ENCODE measurements at regions of chr17 and their contacts with region 1.

Region 1: DNA sequence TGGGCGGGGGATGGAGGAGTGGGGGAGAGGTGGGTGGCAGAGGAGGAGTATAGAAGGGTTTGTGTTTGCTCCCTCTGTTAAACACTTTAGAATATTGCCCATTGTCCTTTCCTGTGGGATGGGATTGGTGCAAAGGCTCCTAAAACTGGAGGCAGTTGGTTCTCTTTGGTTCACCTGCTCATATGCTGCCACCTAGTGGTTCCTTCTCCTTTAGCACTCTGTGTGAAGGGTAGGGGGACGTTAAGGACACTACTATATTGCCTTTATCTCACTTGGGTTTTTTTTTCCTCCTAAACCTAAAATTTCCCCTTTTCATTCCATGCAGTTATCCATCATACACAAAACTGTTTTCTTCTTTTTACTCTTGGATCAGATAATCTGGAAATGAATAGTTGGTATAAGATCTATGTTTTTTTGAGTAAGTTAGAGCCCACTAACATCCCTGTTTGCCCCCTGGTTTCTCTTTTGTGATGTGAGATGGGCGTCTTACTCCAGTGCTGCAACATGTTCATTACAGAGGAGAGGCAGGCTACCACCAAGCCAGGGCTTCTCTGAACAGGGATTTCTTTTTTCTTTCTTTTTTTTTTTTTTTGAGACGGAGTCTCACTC is 23.8 kb downstream of the SNX11 start:
- DNase-seq: peak in 3 of 6 donors; percentile 37 to 62 (median 53)
- ATAC-seq: peak; percentile 72 to 96 (median 91)
- H3K4me3 ChIP-seq: no peak overlapping the region
- H3K27ac ChIP-seq: no peak overlapping the region
- H3K4me1 ChIP-seq: no peaks in the 10 kb centered on the region
- H3K27me3 ChIP-seq: no peaks in the 10 kb centered on the region
- CTCF ChIP-seq: peak; percentile 54 to 87 (median 74)

Region 2: GRCh38 chr17:48024937-48025906 is 106.1 kb before region 1 on chr17:
- intact Hi-C with region 1: loop called in 2 of 3 experiments (anchors 5 kb)
- DNase-seq: peak; percentile 94 to 99 (median 99)
- ATAC-seq: peak; percentile 81 to 91 (median 86)
- H3K4me3 ChIP-seq: peak overlapping the region in 3 of 4 donors; percentile 9 to 53 (median 37)
- H3K27ac ChIP-seq: peak overlapping the region; percentile 6 to 71 (median 42)
- H3K4me1 ChIP-seq: peaks cover 24 to 30% (median 28%) of the 10 kb centered on the region in 3 donors
- H3K27me3 ChIP-seq: no peaks in the 10 kb centered on the region
- CTCF ChIP-seq: peak; percentile 60 to 75 (median 68)

Region 3: DNA sequence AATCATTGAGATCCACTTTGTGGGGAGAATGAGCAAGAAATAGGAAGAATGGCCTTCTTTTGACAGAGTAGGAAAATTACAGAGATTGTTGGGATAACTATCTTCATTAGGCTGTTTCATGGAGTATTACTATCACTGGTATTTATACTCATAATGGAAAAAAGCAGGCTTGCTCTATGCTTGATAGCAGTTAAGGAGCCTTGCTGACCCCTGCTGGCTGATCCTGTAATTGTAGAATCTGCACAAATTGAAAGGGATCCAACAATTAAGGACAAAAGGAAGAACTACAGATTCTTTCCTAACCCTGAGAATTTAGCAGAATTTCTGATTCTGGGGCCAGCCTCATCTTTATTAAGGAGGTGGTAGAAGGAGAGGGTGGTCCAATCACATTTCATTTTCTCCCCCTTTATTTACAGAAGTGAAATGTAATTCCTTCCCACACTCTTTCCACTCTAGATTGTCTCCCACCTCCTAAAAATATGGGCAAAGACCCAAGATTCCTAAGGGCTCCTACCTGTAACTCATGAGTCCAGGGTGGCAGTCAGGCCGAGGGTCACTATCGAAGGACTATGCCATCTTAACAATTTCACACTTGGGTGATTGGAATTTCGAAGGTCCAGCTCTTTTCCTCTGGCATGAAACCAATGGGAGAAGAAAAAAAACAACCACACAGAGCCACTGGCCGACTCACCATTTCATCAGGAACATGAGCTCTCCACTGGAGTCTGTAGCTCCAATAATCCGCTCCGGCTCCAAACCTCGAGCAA is 56.8 kb before region 1 on chr17:
- intact Hi-C with region 1: loop called in 1 of 3 experiments (anchors 10 kb)
- DNase-seq: peak in 5 of 6 donors; percentile 65 to 80 (median 70)
- ATAC-seq: peak; percentile 81 to 98 (median 94)
- H3K4me3 ChIP-seq: no peak overlapping the region
- H3K27ac ChIP-seq: no peak overlapping the region
- H3K4me1 ChIP-seq: peaks cover 0 to 5% (median 0%) of the 10 kb centered on the region in 3 donors
- H3K27me3 ChIP-seq: no peaks in the 10 kb centered on the region
- CTCF ChIP-seq: peak; percentile 49 to 72 (median 60)

Region 4: GRCh38 chr17:48084932-48085444 is 46.3 kb before region 1 on chr17:
- intact Hi-C with region 1: loop called in 1 of 3 experiments (anchors 5 kb)
- DNase-seq: no peak
- ATAC-seq: no peak
- H3K4me3 ChIP-seq: no peak overlapping the region
- H3K27ac ChIP-seq: no peak overlapping the region
- H3K4me1 ChIP-seq: peaks cover 0 to 8% (median 7%) of the 10 kb centered on the region in 3 donors
- H3K27me3 ChIP-seq: no peaks in the 10 kb centered on the region
- CTCF ChIP-seq: no peak